ENCODE measurements at regions of chr11 and their contacts with region 1.

Region 1: DNA sequence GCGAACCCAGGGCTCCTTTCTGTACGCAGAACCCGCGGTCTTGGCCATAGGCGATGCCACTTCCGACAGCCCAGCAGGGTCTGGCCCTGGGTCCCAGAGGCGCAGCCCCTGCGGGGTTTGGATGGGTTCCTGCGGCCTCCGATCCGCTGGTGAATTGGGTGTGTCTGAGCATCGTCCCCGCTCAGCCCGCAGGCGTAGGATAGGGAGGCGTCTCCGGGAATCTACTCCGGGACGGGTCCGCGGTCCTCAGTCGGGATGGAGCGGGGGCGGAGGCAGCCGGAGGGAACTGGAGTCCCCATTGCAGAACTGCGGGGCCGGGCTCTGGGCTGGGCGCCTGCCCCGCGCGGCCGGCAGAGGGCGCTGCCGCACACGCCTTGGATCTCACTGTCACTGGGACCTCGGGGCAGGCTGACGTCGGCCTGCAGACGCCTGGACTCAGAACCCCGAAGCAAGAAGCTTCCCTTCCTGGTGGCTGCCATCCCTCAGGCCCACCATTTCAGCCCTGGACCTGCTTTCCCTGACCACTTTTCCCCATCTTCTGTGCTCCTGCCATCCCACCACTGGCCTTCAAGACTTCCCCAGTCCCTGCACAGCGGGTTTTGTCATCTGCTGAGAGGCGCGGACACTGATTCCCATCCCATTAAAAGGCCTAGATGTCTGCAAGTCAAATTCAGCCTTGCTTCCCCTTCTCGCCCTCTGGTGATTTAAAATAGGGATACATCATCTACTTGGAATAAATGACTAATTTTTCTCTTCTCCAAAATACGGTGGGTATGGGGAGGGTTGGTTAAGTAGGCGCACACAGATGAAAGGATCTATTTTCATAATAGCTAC is 38.3 kb upstream of the CREB3L1 start:
- DNase-seq: peak; percentile 80
- H3K4me3 Mint-ChIP-seq: peak overlapping the region; percentile 78
- H3K27ac Mint-ChIP-seq: no peak overlapping the region
- H3K4me1 Mint-ChIP-seq: peaks cover 48% of the 10 kb centered on the region
- H3K27me3 Mint-ChIP-seq: peaks cover 13% of the 10 kb centered on the region

Region 2: GRCh38 chr11:45846974-45847910 is 391.9 kb before region 1 on chr11 and contains the start of gene CRY2:
- intact Hi-C with region 1: loop called (anchors 2 kb)
- DNase-seq: peak; percentile 97
- H3K4me3 Mint-ChIP-seq: peak within 1 kb of the TSS; percentile 86
- H3K27ac Mint-ChIP-seq: peak within 1 kb of the TSS; percentile 94
- H3K4me1 Mint-ChIP-seq: peaks cover 44% of the 10 kb centered on the region
- H3K27me3 Mint-ChIP-seq: peaks cover 9% of the 10 kb centered on the region
- total RNA-seq, gene CRY2: 19.4 and 23.7 TPM in 2 replicates

Region 3: GRCh38 chr11:46121724-46122477 is 117.3 kb before region 1 on chr11:
- intact Hi-C with region 1: loop called (anchors 1 kb)
- DNase-seq: peak; percentile 76
- H3K4me3 Mint-ChIP-seq: peak overlapping the region; percentile 86
- H3K27ac Mint-ChIP-seq: peak overlapping the region; percentile 91
- H3K4me1 Mint-ChIP-seq: peaks cover 40% of the 10 kb centered on the region
- H3K27me3 Mint-ChIP-seq: no peaks in the 10 kb centered on the region

Region 4: GRCh38 chr11:46216019-46216764 is 23.0 kb before region 1 on chr11:
- intact Hi-C with region 1: no loop called
- DNase-seq: no peak
- H3K4me3 Mint-ChIP-seq: no peak overlapping the region
- H3K27ac Mint-ChIP-seq: no peak overlapping the region
- H3K4me1 Mint-ChIP-seq: peaks cover 8% of the 10 kb centered on the region
- H3K27me3 Mint-ChIP-seq: peaks cover 9% of the 10 kb centered on the region

Region 5: GRCh38 chr11:46295312-46296058 is 56.3 kb after region 1 on chr11:
- intact Hi-C with region 1: loop called (anchors 1 kb)
- DNase-seq: peak; percentile 73
- H3K4me3 Mint-ChIP-seq: peak overlapping the region; percentile 80
- H3K27ac Mint-ChIP-seq: no peak overlapping the region
- H3K4me1 Mint-ChIP-seq: no peaks in the 10 kb centered on the region
- H3K27me3 Mint-ChIP-seq: peaks cover 33% of the 10 kb centered on the region

Region 6: DNA sequence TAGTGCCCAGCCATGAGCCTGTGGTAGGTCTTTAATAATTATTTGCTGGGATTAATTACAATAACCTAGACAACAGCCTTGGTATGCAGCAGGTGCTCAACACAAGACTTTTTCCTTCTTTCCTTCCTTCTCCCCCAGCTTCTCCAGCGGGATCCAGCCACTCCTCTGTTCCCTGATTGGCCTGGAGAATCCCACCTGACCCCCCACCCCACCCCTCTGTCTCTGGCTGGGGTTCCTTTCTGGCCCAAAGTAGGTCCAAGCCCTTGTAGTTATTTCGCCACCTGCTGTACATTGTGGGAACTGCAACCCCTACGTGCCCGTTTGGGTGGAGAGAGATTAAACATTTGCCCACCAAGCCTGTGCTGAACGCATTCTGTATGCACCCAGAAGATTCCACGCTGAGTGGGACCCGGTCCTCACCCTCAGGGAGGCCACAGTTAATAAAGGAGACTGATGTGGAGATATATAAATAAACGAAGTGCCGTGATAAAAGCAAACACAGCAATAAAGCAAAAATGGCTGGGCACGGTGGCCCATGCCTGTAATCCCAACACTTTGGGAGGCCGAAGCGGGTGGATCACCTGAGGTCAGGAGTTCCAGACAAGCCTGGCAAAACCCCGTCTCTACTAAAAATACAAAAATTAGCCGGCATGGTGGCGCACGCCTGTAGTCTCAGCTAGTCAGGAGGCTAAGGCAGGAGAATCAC is 76.0 kb after region 1 on chr11:
- intact Hi-C with region 1: loop called (anchors 1 kb)
- DNase-seq: peak; percentile 54
- H3K4me3 Mint-ChIP-seq: no peak overlapping the region
- H3K27ac Mint-ChIP-seq: no peak overlapping the region
- H3K4me1 Mint-ChIP-seq: peaks cover 26% of the 10 kb centered on the region
- H3K27me3 Mint-ChIP-seq: no peaks in the 10 kb centered on the region

Region 7: DNA sequence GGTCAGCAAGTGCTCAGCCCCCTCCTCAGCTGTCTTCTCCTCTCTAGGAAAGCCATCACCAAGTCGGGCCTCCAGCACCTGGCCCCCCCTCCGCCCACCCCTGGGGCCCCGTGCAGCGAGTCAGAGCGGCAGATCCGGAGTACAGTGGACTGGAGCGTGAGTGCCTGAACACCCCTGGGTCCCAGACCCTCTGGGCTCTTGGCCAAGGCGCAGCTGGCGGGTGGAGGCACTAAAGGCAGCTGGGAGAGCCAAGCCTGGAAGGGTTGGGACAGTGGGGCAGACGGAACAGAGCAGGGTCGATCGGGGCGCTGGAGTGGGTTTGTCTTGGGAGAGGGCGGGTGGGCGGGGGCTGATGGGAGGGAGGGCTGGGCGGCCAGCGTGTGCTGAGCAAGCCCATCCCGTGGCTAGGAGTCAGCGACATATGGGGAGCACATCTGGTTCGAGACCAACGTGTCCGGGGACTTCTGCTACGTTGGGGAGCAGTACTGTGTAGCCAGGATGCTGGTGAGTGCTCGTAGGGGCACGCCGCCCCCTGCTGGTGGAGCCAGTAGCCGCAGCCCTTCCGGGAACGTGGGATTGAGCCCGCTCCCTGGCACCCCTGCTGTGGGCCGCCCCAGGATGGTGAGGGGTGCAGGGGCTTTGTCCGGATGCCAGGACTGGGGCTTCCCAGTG is 128.2 kb after region 1 on chr11:
- intact Hi-C with region 1: loop called (anchors 5 kb)
- DNase-seq: peak; percentile 61
- H3K4me3 Mint-ChIP-seq: no peak overlapping the region
- H3K27ac Mint-ChIP-seq: peak overlapping the region; percentile 34
- H3K4me1 Mint-ChIP-seq: peaks cover 18% of the 10 kb centered on the region
- H3K27me3 Mint-ChIP-seq: no peaks in the 10 kb centered on the region

Region 8: GRCh38 chr11:46537537-46538295 is 298.5 kb after region 1 on chr11:
- intact Hi-C with region 1: loop called (anchors 2 kb)
- DNase-seq: peak; percentile 47
- H3K4me3 Mint-ChIP-seq: no peak overlapping the region
- H3K27ac Mint-ChIP-seq: no peak overlapping the region
- H3K4me1 Mint-ChIP-seq: peaks cover 15% of the 10 kb centered on the region
- H3K27me3 Mint-ChIP-seq: no peaks in the 10 kb centered on the region

Measured in activated T-helper 1 cell treated with anti-CD3 and anti-CD28 coated beads, Interleukin-12 subunit alpha, Interleukin-12 subunit beta, Interleukin-2, Interleukin-4 antibody, amounts not matched to agents 30 ng/mL and 10 ng/mL and 1 ng/mL, durations not matched to agents 14 hours and 24 hours and 36 hours (primary cell).